Left lung (tissue), 14 donors: ENCODE measurements at regions of chr6 and their contacts with region 1.

Region 1: GRCh38 chr6:34248727-34249551 is at the start of gene SMIM29:
- DNase-seq: peak; percentile 94 to 100 (median 98)
- ATAC-seq: peak; percentile 96
- H3K4me3 ChIP-seq: peak within 1 kb of the TSS; percentile 83 to 91
- H3K27ac ChIP-seq: peak within 1 kb of the TSS; percentile 86 to 95
- H3K4me1 ChIP-seq: peaks cover 8 to 40% of the 10 kb centered on the region in 2 donors
- H3K27me3 ChIP-seq: no peaks in the 10 kb centered on the region
- CTCF ChIP-seq: peak; percentile 94 to 98
- polyA plus RNA-seq, gene SMIM29: 11.0 to 15.7 (median 13.2) TPM

Region 2: GRCh38 chr6:34132486-34133185 is 116.3 kb before region 1 on chr6:
- intact Hi-C with region 1: no loop called
- DNase-seq: peak in 2 of 4 donors; percentile 36 to 66
- ATAC-seq: peak; percentile 58
- H3K4me3 ChIP-seq: no peak overlapping the region
- H3K27ac ChIP-seq: no peak overlapping the region
- H3K4me1 ChIP-seq: no peaks in the 10 kb centered on the region
- H3K27me3 ChIP-seq: peaks cover 0 to 92% of the 10 kb centered on the region in 2 donors
- CTCF ChIP-seq: no peak

Region 3: DNA sequence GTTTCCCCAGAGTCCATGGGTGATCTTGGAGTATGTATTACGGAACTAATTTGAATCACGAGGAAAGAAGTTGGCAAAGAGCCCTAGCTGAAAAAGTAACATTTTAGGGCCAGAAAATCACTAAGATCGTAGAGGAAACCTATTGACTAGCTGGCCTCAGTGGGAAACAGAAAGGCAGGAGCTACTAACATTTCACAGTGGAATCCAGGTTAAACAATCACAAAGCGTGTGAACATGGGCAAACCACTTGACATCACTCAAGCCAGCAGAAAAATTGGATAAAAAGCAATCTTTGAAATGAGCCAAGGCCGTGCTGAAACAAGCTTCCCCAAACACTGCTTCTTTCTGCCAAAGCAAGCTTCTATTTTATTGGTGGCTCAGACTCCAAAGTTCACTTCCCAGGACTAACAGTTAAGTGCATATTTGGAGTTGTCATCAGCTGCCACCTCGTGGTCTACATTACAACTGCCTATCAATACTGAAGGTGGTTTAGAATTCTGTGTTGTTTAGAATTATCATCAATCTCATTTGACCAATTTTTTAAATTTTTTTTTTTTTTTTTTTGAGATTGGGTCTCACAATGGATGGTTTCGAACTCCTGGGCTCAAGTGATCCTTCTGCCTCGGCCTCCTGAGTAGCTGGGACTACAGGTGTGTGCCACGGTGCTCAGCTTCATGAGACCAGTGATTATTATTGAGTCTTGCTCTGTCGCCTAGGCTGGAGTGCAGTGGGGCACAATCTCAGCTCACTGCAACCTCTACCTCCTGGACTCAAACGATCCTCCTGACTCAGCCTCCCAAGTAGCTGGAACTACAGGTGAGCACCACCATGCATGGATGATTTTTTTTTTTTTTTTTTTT is 166.3 kb after region 1 on chr6:
- intact Hi-C with region 1: loop called in 1 of 2 experiments (anchors 5 kb)
- DNase-seq: peak in 2 of 4 donors; percentile 63 to 83
- ATAC-seq: peak; percentile 96
- H3K4me3 ChIP-seq: no peak overlapping the region
- H3K27ac ChIP-seq: peak overlapping the region in 1 of 2 donors; percentile 60
- H3K4me1 ChIP-seq: peaks cover 7 to 11% of the 10 kb centered on the region in 2 donors
- H3K27me3 ChIP-seq: no peaks in the 10 kb centered on the region
- CTCF ChIP-seq: peak; percentile 55 to 61